Breast epithelium (tissue), 4 donors: ENCODE measurements at regions of chr7 and their contacts with region 1.

Region 1: GRCh38 chr7:83976295-83976694 is 218.3 kb downstream of the SEMA3A start:
- DNase-seq: no peak
- H3K4me3 ChIP-seq: no peak overlapping the region
- H3K27ac ChIP-seq: no peak overlapping the region
- H3K4me1 ChIP-seq: no peaks in the 10 kb centered on the region
- H3K27me3 ChIP-seq: no peaks in the 10 kb centered on the region
- CTCF ChIP-seq: peak; percentile 23 to 79 (median 76)
- POLR2A ChIP-seq: no peak

Region 2: DNA sequence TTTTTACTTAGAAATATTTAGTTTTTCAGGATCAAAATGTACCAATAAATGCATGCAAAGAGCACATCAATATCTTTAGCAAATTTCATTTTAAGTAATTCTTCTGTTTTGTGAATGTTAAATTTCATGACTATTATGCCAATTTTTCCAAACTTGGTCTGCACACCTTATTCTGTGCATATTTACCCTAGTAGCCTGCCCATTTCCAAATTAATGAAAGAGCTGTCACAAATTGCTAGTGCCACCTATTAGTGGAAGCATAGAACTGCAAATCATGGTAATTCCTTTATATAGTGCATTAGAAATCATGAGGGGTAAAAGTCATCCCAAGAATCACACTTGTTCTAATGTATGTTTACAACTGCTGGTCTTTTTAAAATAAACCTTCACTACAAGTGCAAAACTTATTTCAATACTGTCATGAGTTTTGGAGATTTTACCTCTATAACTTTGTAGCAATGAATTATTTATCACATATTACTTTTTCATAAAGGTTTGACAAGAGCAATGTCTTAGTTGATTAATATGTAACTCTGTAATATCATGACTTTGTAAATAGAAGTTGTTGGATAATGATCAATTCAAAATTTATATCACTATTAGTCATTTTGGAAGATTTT is 212.6 kb after region 1 on chr7:
- intact Hi-C with region 1: loop called (anchors 5 kb)
- DNase-seq: no peak
- H3K4me3 ChIP-seq: no peak overlapping the region
- H3K27ac ChIP-seq: no peak overlapping the region
- H3K4me1 ChIP-seq: no peaks in the 10 kb centered on the region
- H3K27me3 ChIP-seq: no peaks in the 10 kb centered on the region
- CTCF ChIP-seq: no peak
- POLR2A ChIP-seq: no peak